ENCODE measurements at regions of chr20 and their contacts with region 1.

Region 1: GRCh38 chr20:43456809-43457639 is 672 bp upstream of the SRSF6 start:
- DNase-seq: no peak
- ATAC-seq: peak; percentile 83
- H3K4me3 Mint-ChIP-seq: peak overlapping the region; percentile 95
- H3K27ac Mint-ChIP-seq: peak overlapping the region; percentile 98
- H3K4me1 Mint-ChIP-seq: peaks cover 31% of the 10 kb centered on the region
- H3K27me3 Mint-ChIP-seq: peaks cover 5% of the 10 kb centered on the region
- CTCF ChIP-seq: no peak

Region 2: GRCh38 chr20:43363506-43363905 is 93.5 kb before region 1 on chr20:
- CTCF ChIA-PET with region 1: no interaction called
- POLR2A ChIA-PET with region 1: no interaction called
- intact Hi-C with region 1: no loop called
- DNase-seq: no peak
- ATAC-seq: no peak
- H3K4me3 Mint-ChIP-seq: no peak overlapping the region
- H3K27ac Mint-ChIP-seq: no peak overlapping the region
- H3K4me1 Mint-ChIP-seq: no peaks in the 10 kb centered on the region
- H3K27me3 Mint-ChIP-seq: peaks cover 22% of the 10 kb centered on the region
- CTCF ChIP-seq: no peak

Region 3: GRCh38 chr20:43514062-43514999 is 57.3 kb after region 1 on chr20:
- CTCF ChIA-PET with region 1: no interaction called
- POLR2A ChIA-PET with region 1: interaction called, 44 read pairs
- intact Hi-C with region 1: loop called (anchors 1 kb)
- DNase-seq: peak; percentile 83
- ATAC-seq: peak; percentile 89
- H3K4me3 Mint-ChIP-seq: peak overlapping the region; percentile 93
- H3K27ac Mint-ChIP-seq: peak overlapping the region; percentile 88
- H3K4me1 Mint-ChIP-seq: peaks cover 22% of the 10 kb centered on the region
- H3K27me3 Mint-ChIP-seq: peaks cover 11% of the 10 kb centered on the region
- CTCF ChIP-seq: no peak

Region 4: GRCh38 chr20:43590392-43591323 is 133.6 kb after region 1 on chr20 and contains the start of gene IFT52:
- CTCF ChIA-PET with region 1: no interaction called
- POLR2A ChIA-PET with region 1: interaction called, 21 read pairs
- intact Hi-C with region 1: loop called (anchors 1 kb)
- DNase-seq: peak; percentile 83
- ATAC-seq: peak; percentile 97
- H3K4me3 Mint-ChIP-seq: peak within 1 kb of the TSS; percentile 94
- H3K27ac Mint-ChIP-seq: peak within 1 kb of the TSS; percentile 95
- H3K4me1 Mint-ChIP-seq: peaks cover 17% of the 10 kb centered on the region
- H3K27me3 Mint-ChIP-seq: peaks cover 2% of the 10 kb centered on the region
- CTCF ChIP-seq: no peak
- total RNA-seq, gene IFT52: 18.7 and 20.8 TPM in 2 replicates

Region 5: GRCh38 chr20:43728044-43728529 is 271.1 kb after region 1 on chr20:
- CTCF ChIA-PET with region 1: no interaction called
- POLR2A ChIA-PET with region 1: no interaction called
- intact Hi-C with region 1: loop called (anchors 5 kb)
- DNase-seq: no peak
- ATAC-seq: peak; percentile 34
- H3K4me3 Mint-ChIP-seq: no peak overlapping the region
- H3K27ac Mint-ChIP-seq: no peak overlapping the region
- H3K4me1 Mint-ChIP-seq: peaks cover 38% of the 10 kb centered on the region
- H3K27me3 Mint-ChIP-seq: no peaks in the 10 kb centered on the region
- CTCF ChIP-seq: no peak

Region 6: DNA sequence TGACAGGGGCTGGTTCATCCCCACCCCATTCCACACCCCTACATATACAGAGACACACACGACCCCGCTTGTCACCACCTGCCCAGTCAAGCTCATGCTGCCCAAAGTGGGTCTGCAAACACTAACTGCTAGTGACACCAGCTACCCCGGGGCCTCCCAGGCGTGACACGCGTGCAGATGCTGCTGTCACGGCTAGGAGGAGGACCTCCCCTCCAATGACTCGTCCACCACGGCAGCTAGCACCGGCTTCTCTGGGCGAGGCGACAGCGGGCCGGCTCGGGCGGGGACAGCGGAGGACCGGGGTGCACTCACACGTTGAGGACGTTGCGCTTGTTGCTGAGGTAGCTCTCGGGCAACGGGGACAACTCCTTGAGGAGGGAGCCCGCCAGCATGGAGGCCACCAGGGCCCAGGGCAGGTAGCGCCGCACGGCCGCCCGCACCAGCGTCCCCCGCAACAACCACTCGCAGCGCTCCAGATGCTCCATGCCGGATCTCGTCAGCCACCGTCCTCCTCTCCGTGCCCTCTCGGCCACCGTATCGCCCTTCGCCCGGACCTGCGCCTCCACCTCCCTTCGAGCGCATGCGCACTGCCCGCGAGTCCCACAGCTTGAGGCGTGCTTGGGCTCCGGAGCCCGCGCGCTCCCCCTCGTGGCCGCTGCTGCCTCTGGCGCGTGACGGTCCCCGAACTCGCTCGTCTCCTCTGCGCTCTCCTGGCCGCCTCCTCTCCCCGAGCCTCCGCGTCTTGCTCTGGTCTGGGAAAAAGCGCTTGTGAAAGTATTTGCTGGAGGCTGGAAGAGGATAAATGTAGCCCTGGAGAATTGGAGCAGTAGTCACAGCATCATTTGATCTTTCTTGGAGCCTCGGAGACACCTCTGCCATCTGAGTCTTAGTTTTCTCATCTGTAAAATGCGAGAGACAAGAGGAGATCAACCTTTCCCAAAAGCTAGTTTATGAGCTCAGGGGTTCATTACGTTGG is 853.9 kb after region 1 on chr20 and contains the start of gene FITM2:
- CTCF ChIA-PET with region 1: no interaction called
- POLR2A ChIA-PET with region 1: no interaction called
- intact Hi-C with region 1: loop called (anchors 5 kb)
- DNase-seq: peak; percentile 99
- ATAC-seq: peak; percentile 97
- H3K4me3 Mint-ChIP-seq: peak within 1 kb of the TSS; percentile 91
- H3K27ac Mint-ChIP-seq: peak within 1 kb of the TSS; percentile 85
- H3K4me1 Mint-ChIP-seq: peaks cover 19% of the 10 kb centered on the region
- H3K27me3 Mint-ChIP-seq: peaks cover 3% of the 10 kb centered on the region
- CTCF ChIP-seq: no peak
- total RNA-seq, gene FITM2: 2.4 and 3.3 TPM in 2 replicates